ENCODE measurements at regions of chr2 and their contacts with region 1.

Region 1: DNA sequence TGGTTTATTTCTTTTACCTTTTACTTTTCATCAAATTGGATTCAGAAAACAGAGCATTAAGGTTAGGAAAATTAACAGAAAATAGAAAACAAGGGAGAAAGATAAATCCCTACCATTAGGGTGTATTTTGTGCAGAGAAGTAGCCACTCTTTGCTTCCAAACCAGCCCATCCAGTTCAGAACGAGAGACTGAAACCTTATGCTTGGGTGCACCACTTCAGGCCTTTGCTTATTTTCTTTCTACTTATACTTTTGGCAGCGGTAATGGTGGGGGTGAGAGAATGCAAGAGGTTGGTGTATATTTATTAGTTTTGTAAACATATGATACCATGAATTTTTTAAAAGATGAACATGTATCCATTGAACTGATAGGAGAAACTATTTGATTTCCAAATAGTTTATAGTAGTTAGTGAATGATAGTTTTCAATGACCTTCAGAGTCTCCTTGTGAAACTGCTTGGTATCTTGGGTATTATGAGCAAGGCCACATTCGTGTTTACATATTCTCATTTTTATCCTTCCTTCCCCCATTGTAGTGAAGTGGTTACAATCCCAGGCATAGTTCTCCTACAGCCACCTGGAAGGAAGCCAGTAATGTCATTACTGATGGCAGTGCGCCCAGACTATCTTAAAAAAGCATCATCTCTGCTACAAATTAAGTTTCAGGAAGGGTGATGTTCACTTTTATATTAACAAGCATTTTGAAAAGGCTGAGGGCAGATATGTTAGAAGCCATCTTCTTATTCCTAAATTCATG is 60.8 kb downstream of the MFSD6 start:
- DNase-seq: peak; percentile 82
- ATAC-seq: peak; percentile 91

Region 2: GRCh38 chr2:190415794-190416775 is 52.9 kb before region 1 on chr2:
- intact Hi-C with region 1: loop called (anchors 10 kb)
- DNase-seq: no peak
- ATAC-seq: no peak